ENCODE measurements at regions of chr14 and their contacts with region 1.

Region 1: GRCh38 chr14:39342768-39343167 is 89.5 kb downstream of the FBXO33 start:
- DNase-seq: no peak
- ATAC-seq: peak; percentile 90
- H3K4me3 Mint-ChIP-seq: no peak overlapping the region
- H3K27ac Mint-ChIP-seq: no peak overlapping the region
- H3K4me1 Mint-ChIP-seq: peaks cover 19% of the 10 kb centered on the region
- H3K27me3 Mint-ChIP-seq: no peaks in the 10 kb centered on the region
- CTCF ChIP-seq: no peak

Region 2: GRCh38 chr14:39360316-39360715 is 17.5 kb after region 1 on chr14:
- CTCF ChIA-PET with region 1: no interaction called
- POLR2A ChIA-PET with region 1: no interaction called
- intact Hi-C with region 1: no loop called
- DNase-seq: no peak
- ATAC-seq: no peak
- H3K4me3 Mint-ChIP-seq: no peak overlapping the region
- H3K27ac Mint-ChIP-seq: no peak overlapping the region
- H3K4me1 Mint-ChIP-seq: no peaks in the 10 kb centered on the region
- H3K27me3 Mint-ChIP-seq: no peaks in the 10 kb centered on the region
- CTCF ChIP-seq: no peak

Region 3: GRCh38 chr14:39383026-39383660 is 40.4 kb after region 1 on chr14:
- CTCF ChIA-PET with region 1: no interaction called
- POLR2A ChIA-PET with region 1: no interaction called
- intact Hi-C with region 1: loop called (anchors 5 kb)
- DNase-seq: no peak
- ATAC-seq: peak; percentile 83
- H3K4me3 Mint-ChIP-seq: no peak overlapping the region
- H3K27ac Mint-ChIP-seq: no peak overlapping the region
- H3K4me1 Mint-ChIP-seq: peaks cover 20% of the 10 kb centered on the region
- H3K27me3 Mint-ChIP-seq: no peaks in the 10 kb centered on the region
- CTCF ChIP-seq: no peak

Region 4: GRCh38 chr14:39446131-39446744 is 103.5 kb after region 1 on chr14:
- CTCF ChIA-PET with region 1: no interaction called
- POLR2A ChIA-PET with region 1: no interaction called
- intact Hi-C with region 1: no loop called
- DNase-seq: no peak
- ATAC-seq: peak; percentile 54
- H3K4me3 Mint-ChIP-seq: peak overlapping the region; percentile 37
- H3K27ac Mint-ChIP-seq: peak overlapping the region; percentile 94
- H3K4me1 Mint-ChIP-seq: peaks cover 47% of the 10 kb centered on the region
- H3K27me3 Mint-ChIP-seq: no peaks in the 10 kb centered on the region
- CTCF ChIP-seq: no peak